ENCODE measurements at regions of chr3 and their contacts with region 1.

Region 1: GRCh38 chr3:59424268-59425010 is 374.6 kb upstream of the CFAP20DC start:
- DNase-seq: peak; percentile 62 to 78 (median 70)
- H3K4me3 ChIP-seq: peak overlapping the region in 1 of 2 donors; percentile 10
- H3K4me3 Mint-ChIP-seq: peak overlapping the region; percentile 50 to 79 (median 62)
- H3K27ac ChIP-seq: no peak overlapping the region
- H3K27ac Mint-ChIP-seq: peak overlapping the region; percentile 68 to 96 (median 93)
- H3K4me1 ChIP-seq: peaks cover 47% of the 10 kb centered on the region
- H3K4me1 Mint-ChIP-seq: peaks cover 45 to 66% (median 55%) of the 10 kb centered on the region in 4 donors
- H3K27me3 ChIP-seq: no peaks in the 10 kb centered on the region
- H3K27me3 Mint-ChIP-seq: no peaks in the 10 kb centered on the region

Region 2: DNA sequence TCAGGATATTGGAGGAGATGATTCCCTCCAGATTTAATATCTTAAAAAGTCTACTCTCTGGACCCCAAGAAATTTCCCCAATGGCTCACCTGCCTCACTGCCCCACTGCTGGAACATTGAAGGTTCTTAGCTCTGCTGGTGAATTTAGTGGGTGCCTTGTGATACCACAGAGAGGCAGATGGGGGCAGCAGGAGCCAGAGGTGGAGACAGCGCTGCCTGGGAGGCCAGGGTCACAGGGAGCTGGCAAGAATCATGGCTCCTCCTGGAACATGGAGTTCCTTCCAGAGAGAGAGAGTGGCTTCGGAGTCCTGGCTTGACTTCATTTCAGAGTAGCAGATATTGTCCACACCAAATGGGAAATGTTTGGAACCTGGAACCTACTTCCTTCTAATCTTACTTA is 111.1 kb before region 1 on chr3:
- CTCF ChIA-PET with region 1: interaction called, 5 read pairs
- POLR2A ChIA-PET with region 1: no interaction called
- intact Hi-C with region 1: loop called (anchors 10 kb)
- DNase-seq: peak in 4 of 5 donors; percentile 12 to 22 (median 16)
- H3K4me3 ChIP-seq: no peak overlapping the region
- H3K4me3 Mint-ChIP-seq: no peak overlapping the region
- H3K27ac ChIP-seq: no peak overlapping the region
- H3K27ac Mint-ChIP-seq: no peak overlapping the region
- H3K4me1 ChIP-seq: no peaks in the 10 kb centered on the region
- H3K4me1 Mint-ChIP-seq: peaks cover 0 to 14% (median 5%) of the 10 kb centered on the region in 4 donors
- H3K27me3 ChIP-seq: no peaks in the 10 kb centered on the region
- H3K27me3 Mint-ChIP-seq: peaks cover 0 to 2% of the 10 kb centered on the region in 2 donors

Region 3: GRCh38 chr3:59444294-59444671 is 19.8 kb after region 1 on chr3:
- CTCF ChIA-PET with region 1: interaction called, 14 read pairs
- POLR2A ChIA-PET with region 1: interaction called, 40 read pairs
- intact Hi-C with region 1: no loop called
- DNase-seq: peak in 2 of 5 donors; percentile 24 to 25
- H3K4me3 ChIP-seq: peak overlapping the region; percentile 5 to 13
- H3K4me3 Mint-ChIP-seq: peak overlapping the region; percentile 56 to 88 (median 80)
- H3K27ac ChIP-seq: peak overlapping the region; percentile 32
- H3K27ac Mint-ChIP-seq: peak overlapping the region; percentile 74 to 97 (median 95)
- H3K4me1 ChIP-seq: peaks cover 45% of the 10 kb centered on the region
- H3K4me1 Mint-ChIP-seq: peaks cover 31 to 61% (median 50%) of the 10 kb centered on the region in 4 donors
- H3K27me3 ChIP-seq: no peaks in the 10 kb centered on the region
- H3K27me3 Mint-ChIP-seq: no peaks in the 10 kb centered on the region

Region 4: DNA sequence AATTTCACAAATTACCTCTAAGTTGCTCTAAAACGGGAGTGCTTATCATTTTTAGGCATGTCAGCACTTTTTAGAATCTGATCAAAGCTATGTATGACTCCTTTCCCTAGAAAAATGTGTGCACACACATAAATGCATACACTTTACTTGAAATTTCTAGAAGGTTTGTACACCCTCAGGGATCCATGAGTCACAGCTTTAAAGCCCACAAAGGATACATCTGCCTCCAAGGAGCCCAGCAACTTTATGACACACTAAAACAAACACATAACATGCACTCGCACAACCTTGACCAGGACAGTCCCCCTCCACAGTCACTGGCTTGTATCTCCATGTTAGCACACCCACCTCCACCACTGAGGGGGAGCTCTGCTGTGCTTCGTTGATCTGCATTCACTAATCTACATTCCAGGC is 347.3 kb after region 1 on chr3:
- CTCF ChIA-PET with region 1: no interaction called
- POLR2A ChIA-PET with region 1: no interaction called
- intact Hi-C with region 1: loop called (anchors 10 kb)
- DNase-seq: no peak
- H3K4me3 ChIP-seq: no peak overlapping the region
- H3K4me3 Mint-ChIP-seq: peak overlapping the region in 4 of 8 donors; percentile 66 to 78 (median 73)
- H3K27ac ChIP-seq: no peak overlapping the region
- H3K27ac Mint-ChIP-seq: no peak overlapping the region
- H3K4me1 ChIP-seq: peaks cover 31% of the 10 kb centered on the region
- H3K4me1 Mint-ChIP-seq: peaks cover 32 to 52% (median 35%) of the 10 kb centered on the region in 4 donors
- H3K27me3 ChIP-seq: no peaks in the 10 kb centered on the region
- H3K27me3 Mint-ChIP-seq: no peaks in the 10 kb centered on the region

Region 5: GRCh38 chr3:60497902-60498301 is 1073.5 kb after region 1 on chr3:
- CTCF ChIA-PET with region 1: no interaction called
- POLR2A ChIA-PET with region 1: no interaction called
- intact Hi-C with region 1: no loop called
- DNase-seq: no peak
- H3K4me3 ChIP-seq: no peak overlapping the region
- H3K4me3 Mint-ChIP-seq: no peak overlapping the region
- H3K27ac ChIP-seq: no peak overlapping the region
- H3K27ac Mint-ChIP-seq: no peak overlapping the region
- H3K4me1 ChIP-seq: no peaks in the 10 kb centered on the region
- H3K4me1 Mint-ChIP-seq: no peaks in the 10 kb centered on the region
- H3K27me3 ChIP-seq: no peaks in the 10 kb centered on the region
- H3K27me3 Mint-ChIP-seq: no peaks in the 10 kb centered on the region